PC-9 (cell line): ENCODE measurements at regions of chr10 and their contacts with region 1.

Region 1: GRCh38 chr10:34723750-34724149 is 91.3 kb downstream of the PARD3 start:
- DNase-seq: no peak
- H3K4me3 ChIP-seq: no peak overlapping the region
- H3K27ac ChIP-seq: no peak overlapping the region
- H3K4me1 ChIP-seq: peaks cover 42% of the 10 kb centered on the region
- H3K27me3 ChIP-seq: no peaks in the 10 kb centered on the region
- CTCF ChIP-seq: no peak

Region 2: GRCh38 chr10:34768261-34768971 is 44.7 kb after region 1 on chr10:
- CTCF ChIA-PET with region 1: no interaction called
- POLR2A ChIA-PET with region 1: interaction called, 13 read pairs
- intact Hi-C with region 1: no loop called
- DNase-seq: peak in 1 of 2 experiments; percentile 64
- H3K4me3 ChIP-seq: no peak overlapping the region
- H3K27ac ChIP-seq: no peak overlapping the region
- H3K4me1 ChIP-seq: no peaks in the 10 kb centered on the region
- H3K27me3 ChIP-seq: no peaks in the 10 kb centered on the region
- CTCF ChIP-seq: no peak

Region 3: GRCh38 chr10:34967335-34967880 is 243.7 kb after region 1 on chr10:
- CTCF ChIA-PET with region 1: interaction called, 12 read pairs
- POLR2A ChIA-PET with region 1: no interaction called
- intact Hi-C with region 1: no loop called
- DNase-seq: no peak
- H3K4me3 ChIP-seq: no peak overlapping the region
- H3K27ac ChIP-seq: no peak overlapping the region
- H3K4me1 ChIP-seq: peaks cover 11% of the 10 kb centered on the region
- H3K27me3 ChIP-seq: no peaks in the 10 kb centered on the region
- CTCF ChIP-seq: no peak

Region 4: DNA sequence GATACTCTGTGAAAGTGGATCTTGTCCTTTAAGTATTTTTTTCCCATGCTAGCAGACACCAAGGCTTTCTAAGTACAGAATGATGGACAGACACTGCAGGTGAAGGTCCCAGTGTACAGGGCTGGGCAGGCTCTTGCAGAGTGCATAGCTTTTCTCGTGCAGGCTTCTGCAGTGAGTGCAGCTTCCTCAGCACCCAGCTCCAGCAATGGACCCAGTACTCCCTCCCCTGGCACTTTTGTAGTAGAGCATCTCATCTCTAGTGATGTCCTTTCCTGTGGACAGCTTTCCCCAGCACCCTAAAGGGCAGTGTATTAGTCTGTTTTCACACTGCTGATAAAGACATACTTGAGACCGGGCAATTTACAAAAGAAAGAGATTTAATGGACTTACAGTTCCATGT is 262.1 kb after region 1 on chr10:
- CTCF ChIA-PET with region 1: interaction called, 10 read pairs
- POLR2A ChIA-PET with region 1: no interaction called
- intact Hi-C with region 1: no loop called
- DNase-seq: no peak
- H3K4me3 ChIP-seq: no peak overlapping the region
- H3K27ac ChIP-seq: no peak overlapping the region
- H3K4me1 ChIP-seq: no peaks in the 10 kb centered on the region
- H3K27me3 ChIP-seq: no peaks in the 10 kb centered on the region
- CTCF ChIP-seq: peak; percentile 42; the same call in 1 of the 2 replicates